MCF 10A (cell line): ENCODE measurements at regions of chr1 and their contacts with region 1.

Region 1: DNA sequence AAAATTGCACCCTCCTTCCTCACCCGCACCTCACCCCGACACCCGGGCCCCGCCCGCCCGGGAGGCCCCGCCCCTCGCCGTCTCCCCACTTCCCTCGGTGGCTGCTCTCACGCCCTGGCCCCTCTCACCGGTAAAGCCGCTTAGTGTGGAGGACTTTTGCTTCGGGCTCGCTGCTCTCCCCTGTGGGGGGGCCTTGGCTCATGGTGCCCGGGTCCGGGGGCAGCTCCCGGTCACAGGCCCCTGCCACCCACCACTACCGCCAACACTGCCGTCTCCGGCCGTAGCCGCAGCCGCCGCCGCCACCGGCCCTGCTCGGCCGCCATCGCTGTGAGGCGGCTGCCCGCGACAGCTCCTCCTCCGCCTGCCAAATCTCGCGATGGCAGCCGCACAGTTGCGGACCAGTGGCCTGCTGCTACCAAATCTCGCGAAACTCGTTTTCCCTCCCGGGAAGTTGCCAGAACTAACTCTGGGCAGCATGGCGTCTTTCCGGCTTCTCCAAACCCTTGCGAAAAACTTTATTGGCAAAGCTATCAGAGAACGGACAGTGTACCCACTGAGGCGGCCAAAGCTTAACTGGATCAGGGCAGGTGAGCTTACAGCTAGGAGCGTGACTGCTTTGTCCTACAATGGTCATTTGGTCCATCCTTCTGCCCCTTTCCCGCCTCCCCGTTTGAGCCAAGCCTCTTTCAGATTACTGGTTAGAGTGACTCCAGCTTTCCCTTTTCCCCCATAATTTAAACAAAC is at the start of gene SMG5:
- DNase-seq: peak; percentile 100
- H3K4me3 Mint-ChIP-seq: peak within 1 kb of the TSS; percentile 92
- H3K27ac Mint-ChIP-seq: peak within 1 kb of the TSS; percentile 93
- H3K4me1 Mint-ChIP-seq: peaks cover 38% of the 10 kb centered on the region
- H3K27me3 Mint-ChIP-seq: no peaks in the 10 kb centered on the region
- CTCF ChIP-seq: no peak
- total RNA-seq, gene SMG5: 118 and 140 TPM in 2 replicates

Region 2: DNA sequence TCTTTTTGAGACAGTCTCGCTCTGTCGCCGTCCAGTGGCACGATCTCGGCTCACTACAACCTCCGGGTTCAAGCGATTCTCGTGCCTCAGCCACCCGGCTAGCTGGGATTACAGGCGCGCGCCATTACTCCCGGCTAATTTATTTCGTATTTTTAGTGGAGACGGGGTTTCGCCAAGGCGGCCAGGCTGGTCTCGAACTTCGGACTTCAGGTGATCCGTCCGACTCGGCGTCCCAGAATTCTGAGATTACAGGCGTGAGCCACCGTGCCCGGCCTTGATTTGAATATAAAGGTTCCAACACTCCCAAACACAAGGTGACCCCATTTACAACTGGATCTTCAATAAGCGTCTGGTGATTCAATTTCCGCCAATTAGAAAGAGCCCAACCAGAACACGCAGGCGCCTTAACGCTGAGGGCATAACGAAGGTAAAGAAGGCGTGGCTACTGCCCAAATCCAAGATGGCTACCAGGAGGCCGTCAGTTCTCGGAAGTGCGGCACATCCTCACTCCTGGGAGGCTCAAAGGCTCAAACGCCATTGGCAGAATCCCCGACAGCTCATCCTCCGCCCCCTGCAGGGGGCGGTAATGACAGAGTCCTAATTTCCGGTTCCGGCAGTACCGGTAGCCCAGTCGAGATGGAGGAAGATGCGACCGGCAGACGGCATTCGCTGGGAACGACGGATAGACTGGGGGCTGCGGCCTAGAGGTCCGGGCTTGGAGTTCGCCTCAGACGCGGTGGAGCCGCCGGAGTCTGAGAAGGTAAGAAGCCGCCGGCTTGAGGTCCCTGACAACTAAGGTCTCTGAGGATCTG is 89.0 kb before region 1 on chr1 and contains the start of gene SLC25A44:
- CTCF ChIA-PET with region 1: interaction called, 9 read pairs
- POLR2A ChIA-PET with region 1: interaction called, 28 read pairs
- intact Hi-C with region 1: no loop called
- DNase-seq: peak; percentile 100
- H3K4me3 Mint-ChIP-seq: peak within 1 kb of the TSS; percentile 96
- H3K27ac Mint-ChIP-seq: peak within 1 kb of the TSS; percentile 90
- H3K4me1 Mint-ChIP-seq: peaks cover 16% of the 10 kb centered on the region
- H3K27me3 Mint-ChIP-seq: no peaks in the 10 kb centered on the region
- CTCF ChIP-seq: peak; percentile 49
- total RNA-seq, gene SLC25A44: 28.7 and 32.3 TPM in 2 replicates

Region 3: GRCh38 chr1:156268336-156268735 is 14.3 kb before region 1 on chr1:
- CTCF ChIA-PET with region 1: interaction called, 8 read pairs
- POLR2A ChIA-PET with region 1: interaction called, 45 read pairs
- intact Hi-C with region 1: loop called (anchors 1 kb)
- DNase-seq: no peak
- H3K4me3 Mint-ChIP-seq: no peak overlapping the region
- H3K27ac Mint-ChIP-seq: no peak overlapping the region
- H3K4me1 Mint-ChIP-seq: peaks cover 23% of the 10 kb centered on the region
- H3K27me3 Mint-ChIP-seq: no peaks in the 10 kb centered on the region
- CTCF ChIP-seq: no peak

Region 4: DNA sequence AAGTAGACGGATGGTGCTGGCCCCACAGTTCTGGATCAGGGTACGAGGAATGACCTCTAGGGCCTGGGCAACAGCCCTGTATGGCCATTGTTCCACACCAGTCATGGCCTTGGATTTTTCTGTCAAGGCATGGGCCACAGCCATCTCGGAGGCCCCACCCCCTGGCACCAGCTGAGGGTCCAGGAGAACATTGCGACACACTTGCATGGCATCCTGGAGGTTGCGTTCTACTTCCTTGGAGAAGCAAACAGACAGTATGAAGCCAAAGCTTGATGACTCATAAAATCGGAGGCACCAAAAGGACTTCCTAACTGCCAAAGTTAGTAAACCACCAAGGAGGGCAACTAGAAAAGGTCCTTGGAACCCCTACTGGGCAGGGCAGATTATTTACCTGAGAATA is 28.3 kb after region 1 on chr1:
- CTCF ChIA-PET with region 1: interaction called, 72 read pairs
- POLR2A ChIA-PET with region 1: interaction called, 210 read pairs
- intact Hi-C with region 1: loop called (anchors 5 kb)
- DNase-seq: peak; percentile 96
- H3K4me3 Mint-ChIP-seq: no peak overlapping the region
- H3K27ac Mint-ChIP-seq: no peak overlapping the region
- H3K4me1 Mint-ChIP-seq: peaks cover 14% of the 10 kb centered on the region
- H3K27me3 Mint-ChIP-seq: no peaks in the 10 kb centered on the region
- CTCF ChIP-seq: no peak

Region 5: DNA sequence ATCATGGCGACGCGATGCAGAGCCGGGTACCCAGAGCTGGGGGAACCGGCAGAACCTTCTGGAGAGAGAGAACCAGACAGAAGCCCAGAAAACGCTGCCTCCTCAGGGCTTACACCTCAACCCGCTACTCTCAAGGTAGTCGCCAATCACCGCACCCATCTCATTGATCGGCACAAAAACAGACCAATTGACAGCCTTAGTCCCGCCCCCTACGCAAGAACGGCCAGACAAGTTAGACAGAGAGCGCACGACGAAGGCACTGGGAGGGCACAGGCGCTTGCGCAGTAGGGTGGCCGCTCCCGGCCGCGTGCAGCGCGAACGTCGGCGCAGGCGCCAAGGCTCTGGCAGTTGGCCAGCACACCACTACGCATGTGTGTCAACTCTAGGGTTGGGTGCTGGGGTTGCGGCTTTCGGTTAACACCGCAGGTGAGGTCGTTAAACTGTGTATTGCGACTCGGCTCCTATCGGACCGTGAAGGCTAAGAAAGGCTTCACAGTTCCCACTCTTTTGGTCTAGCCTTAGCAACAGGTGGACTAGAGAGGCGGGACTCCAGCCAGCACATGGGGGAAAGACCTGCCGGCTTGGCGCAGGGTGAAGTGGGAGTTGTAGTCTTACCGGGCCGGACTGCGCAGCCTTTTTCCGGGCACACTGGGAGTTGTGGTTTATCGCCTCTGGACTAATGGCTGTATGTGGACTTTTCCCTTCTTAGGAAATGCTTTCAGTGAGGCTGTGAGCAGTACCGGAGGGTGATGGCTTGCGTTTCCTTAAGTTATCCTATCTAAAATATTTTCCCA is 55.7 kb after region 1 on chr1 and contains the starts of genes CCT3 and TSACC:
- CTCF ChIA-PET with region 1: interaction called, 17 read pairs
- POLR2A ChIA-PET with region 1: interaction called, 39 read pairs
- intact Hi-C with region 1: no loop called
- DNase-seq: peak; percentile 100
- H3K4me3 Mint-ChIP-seq: peak within 1 kb of the TSS; percentile 96
- H3K27ac Mint-ChIP-seq: peak within 1 kb of the TSS; percentile 76
- H3K4me1 Mint-ChIP-seq: peaks cover 24% of the 10 kb centered on the region
- H3K27me3 Mint-ChIP-seq: no peaks in the 10 kb centered on the region
- CTCF ChIP-seq: no peak
- total RNA-seq, gene CCT3: 495 and 574 TPM in 2 replicates
- total RNA-seq, gene TSACC: 1.8 and 3.6 TPM in 2 replicates

Region 6: DNA sequence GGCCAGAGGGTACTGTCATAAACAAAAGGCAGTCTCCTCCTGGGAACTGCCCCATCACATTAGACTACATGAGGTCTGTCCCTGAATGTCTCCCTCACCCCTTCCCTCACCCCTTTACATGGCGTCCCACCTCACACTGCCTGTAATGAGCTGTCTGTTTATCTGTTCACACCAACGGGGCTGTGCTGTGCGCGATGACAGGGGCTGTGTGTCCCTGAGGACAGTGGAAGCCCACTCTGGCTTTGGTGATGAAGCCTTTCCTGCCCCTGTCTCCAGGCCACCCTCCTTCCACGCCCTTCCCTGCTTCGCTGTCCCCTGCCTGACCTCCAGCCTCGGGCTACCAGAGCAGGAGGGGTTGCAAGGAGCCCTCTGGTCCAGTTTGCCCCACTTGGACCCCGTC is 109.0 kb after region 1 on chr1:
- CTCF ChIA-PET with region 1: no interaction called
- POLR2A ChIA-PET with region 1: no interaction called
- intact Hi-C with region 1: no loop called
- DNase-seq: no peak
- H3K4me3 Mint-ChIP-seq: no peak overlapping the region
- H3K27ac Mint-ChIP-seq: no peak overlapping the region
- H3K4me1 Mint-ChIP-seq: no peaks in the 10 kb centered on the region
- H3K27me3 Mint-ChIP-seq: no peaks in the 10 kb centered on the region
- CTCF ChIP-seq: no peak